Endothelial cell of umbilical vein (primary cell): ENCODE measurements at regions of chr1 and their contacts with region 1.

Region 1: GRCh38 chr1:39196244-39197215 is 8.0 kb upstream of the MACF1 start:
- DNase-seq: peak; percentile 70
- H3K4me3 ChIP-seq: no peak overlapping the region
- H3K27ac ChIP-seq: peak overlapping the region; percentile 30
- H3K4me1 ChIP-seq: peaks cover 57% of the 10 kb centered on the region
- H3K27me3 ChIP-seq: no peaks in the 10 kb centered on the region
- CTCF ChIP-seq: no peak
- POLR2A ChIP-seq: no peak

Region 2: GRCh38 chr1:39105061-39105840 is 91.3 kb before region 1 on chr1:
- CTCF ChIA-PET with region 1: interaction called, 73 read pairs
- POLR2A ChIA-PET with region 1: no interaction called
- dilution Hi-C with region 1: no loop called
- intact Hi-C with region 1: loop called (anchors 1 kb)
- DNase-seq: peak; percentile 60
- H3K4me3 ChIP-seq: peak overlapping the region; percentile 70 to 79 (median 77)
- H3K27ac ChIP-seq: peak overlapping the region; percentile 82
- H3K4me1 ChIP-seq: peaks cover 53% of the 10 kb centered on the region
- H3K27me3 ChIP-seq: no peaks in the 10 kb centered on the region
- CTCF ChIP-seq: no peak
- POLR2A ChIP-seq: no peak

Region 3: DNA sequence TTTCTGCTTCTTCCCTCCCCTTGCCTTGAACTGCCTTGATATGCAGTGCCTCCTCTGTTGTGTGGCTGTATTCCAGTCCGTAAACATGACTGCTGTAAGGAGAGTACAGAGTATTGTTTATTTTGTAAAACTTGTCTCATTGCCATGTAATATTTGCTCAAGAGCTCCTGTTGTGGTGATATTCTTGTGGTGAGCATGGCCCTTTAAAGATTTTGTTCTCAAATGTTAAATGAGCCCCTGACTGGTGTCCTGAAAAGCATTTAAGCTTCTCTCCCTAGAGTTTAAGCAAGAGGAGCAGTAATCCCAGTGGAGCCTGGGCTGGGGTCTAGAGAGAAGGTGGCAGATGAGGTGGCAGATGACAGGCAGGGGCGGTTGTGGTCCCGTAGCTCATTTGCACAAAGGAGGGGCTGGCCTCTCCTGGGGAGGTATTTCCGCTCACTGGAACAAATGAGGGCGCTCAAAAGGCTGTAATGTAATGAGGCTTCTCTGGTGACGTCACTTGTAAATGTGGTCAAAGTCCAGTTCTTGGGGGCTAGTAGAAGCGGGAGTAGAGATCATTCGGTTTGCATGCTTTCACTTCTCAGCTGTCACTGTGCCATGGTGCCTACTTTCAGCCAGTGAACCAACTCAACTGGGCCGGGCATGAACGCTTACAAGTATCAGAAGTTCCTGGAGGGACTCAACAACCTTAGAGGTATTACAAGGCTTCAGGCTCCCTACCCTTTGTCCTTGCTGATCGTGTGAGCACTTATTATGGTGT is 38.0 kb before region 1 on chr1:
- CTCF ChIA-PET with region 1: interaction called, 29 read pairs
- POLR2A ChIA-PET with region 1: no interaction called
- dilution Hi-C with region 1: no loop called
- intact Hi-C with region 1: loop called (anchors 2 kb)
- DNase-seq: no peak
- H3K4me3 ChIP-seq: no peak overlapping the region
- H3K27ac ChIP-seq: peak overlapping the region; percentile 80
- H3K4me1 ChIP-seq: peaks cover 64% of the 10 kb centered on the region
- H3K27me3 ChIP-seq: no peaks in the 10 kb centered on the region
- CTCF ChIP-seq: no peak
- POLR2A ChIP-seq: no peak

Region 4: GRCh38 chr1:39238476-39238875 is 41.9 kb after region 1 on chr1:
- CTCF ChIA-PET with region 1: interaction called, 20 read pairs
- POLR2A ChIA-PET with region 1: no interaction called
- dilution Hi-C with region 1: no loop called
- intact Hi-C with region 1: no loop called
- DNase-seq: peak; percentile 71
- H3K4me3 ChIP-seq: no peak overlapping the region
- H3K27ac ChIP-seq: peak overlapping the region; percentile 40
- H3K4me1 ChIP-seq: peaks cover 16% of the 10 kb centered on the region
- H3K27me3 ChIP-seq: no peaks in the 10 kb centered on the region
- CTCF ChIP-seq: no peak
- POLR2A ChIP-seq: no peak

Region 5: DNA sequence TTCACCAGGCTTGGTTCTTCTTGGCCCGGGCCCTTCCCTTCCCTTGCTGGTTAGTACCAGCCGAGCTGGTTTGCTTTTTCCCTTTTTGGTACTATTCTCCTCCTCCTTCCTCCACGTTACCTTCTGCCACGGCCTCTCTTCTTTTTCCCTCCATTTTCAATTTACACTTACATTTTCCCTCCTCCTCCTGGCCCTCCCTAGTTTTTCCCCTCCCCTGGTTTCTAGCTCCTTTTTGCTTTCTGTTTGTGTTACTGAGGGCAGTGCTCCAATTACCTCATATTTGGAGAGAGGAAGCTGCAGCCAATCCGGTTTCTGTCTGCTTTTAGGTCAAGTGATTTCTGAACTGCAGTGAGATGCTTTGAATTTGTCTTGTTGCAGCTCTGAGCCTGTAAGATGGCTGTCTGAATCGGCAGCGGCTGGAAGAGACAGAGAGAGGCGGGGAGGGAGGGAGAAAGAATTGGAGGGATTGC is 71.6 kb after region 1 on chr1:
- CTCF ChIA-PET with region 1: interaction called, 10 read pairs
- POLR2A ChIA-PET with region 1: no interaction called
- dilution Hi-C with region 1: no loop called
- intact Hi-C with region 1: no loop called
- DNase-seq: peak; percentile 78
- H3K4me3 ChIP-seq: peak overlapping the region in 2 of 3 experiments; percentile 9 to 49
- H3K27ac ChIP-seq: peak overlapping the region; percentile 70
- H3K4me1 ChIP-seq: peaks cover 22% of the 10 kb centered on the region
- H3K27me3 ChIP-seq: no peaks in the 10 kb centered on the region
- CTCF ChIP-seq: no peak
- POLR2A ChIP-seq: no peak

Region 6: GRCh38 chr1:39538588-39539465 is 342.3 kb after region 1 on chr1:
- CTCF ChIA-PET with region 1: interaction called, 14 read pairs
- POLR2A ChIA-PET with region 1: no interaction called
- dilution Hi-C with region 1: no loop called
- intact Hi-C with region 1: no loop called
- DNase-seq: peak; percentile 75
- H3K4me3 ChIP-seq: no peak overlapping the region
- H3K27ac ChIP-seq: no peak overlapping the region
- H3K4me1 ChIP-seq: no peaks in the 10 kb centered on the region
- H3K27me3 ChIP-seq: no peaks in the 10 kb centered on the region
- CTCF ChIP-seq: peak; percentile 85 to 87
- POLR2A ChIP-seq: no peak